ENCODE measurements at regions of chr9 and their contacts with region 1.

Region 1: DNA sequence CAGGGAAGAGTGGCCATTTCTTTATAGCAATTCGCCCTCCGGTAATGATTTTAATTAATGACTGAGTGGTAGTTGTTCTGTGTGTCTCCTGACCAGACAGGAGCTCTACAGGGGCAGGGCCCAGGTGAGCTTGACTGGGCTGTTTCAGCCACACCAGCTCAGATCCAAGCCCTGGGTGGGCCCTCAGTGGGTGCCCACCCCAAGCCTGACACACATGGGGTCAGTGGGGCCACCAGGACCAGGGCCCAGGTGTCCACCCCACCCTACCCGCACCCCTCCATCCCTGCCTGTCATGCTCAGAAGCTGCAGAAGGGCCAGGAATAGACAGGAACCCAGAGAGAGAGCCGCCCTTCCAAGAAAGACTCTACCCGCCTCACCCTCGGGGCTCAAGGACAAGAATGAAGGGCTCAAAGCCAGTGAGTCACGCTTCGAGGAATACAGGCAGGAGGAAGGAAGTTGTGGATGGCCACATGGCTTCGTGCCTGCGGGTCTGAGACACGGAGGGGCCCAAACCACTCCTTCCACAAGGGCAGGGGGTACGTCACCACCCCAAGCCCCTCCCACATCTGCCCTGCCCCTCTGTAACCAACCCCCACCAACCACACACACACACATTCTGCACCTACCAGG is 56.2 kb upstream of the STXBP1 start:
- DNase-seq: peak in 1 of 2 experiments; percentile 48
- H3K4me3 ChIP-seq: no peak overlapping the region
- H3K4me3 Mint-ChIP-seq: no peak overlapping the region
- H3K27ac Mint-ChIP-seq: peak overlapping the region; percentile 45
- H3K4me1 ChIP-seq: peaks cover 14% of the 10 kb centered on the region
- H3K4me1 Mint-ChIP-seq: no peaks in the 10 kb centered on the region
- H3K27me3 ChIP-seq: no peaks in the 10 kb centered on the region
- H3K27me3 Mint-ChIP-seq: no peaks in the 10 kb centered on the region
- CTCF ChIP-seq: no peak

Region 2: GRCh38 chr9:127277099-127277498 is 278.8 kb before region 1 on chr9:
- CTCF ChIA-PET with region 1: no interaction called
- POLR2A ChIA-PET with region 1: no interaction called
- intact Hi-C with region 1: no loop called
- DNase-seq: no peak
- H3K4me3 ChIP-seq: no peak overlapping the region
- H3K4me3 Mint-ChIP-seq: no peak overlapping the region
- H3K27ac Mint-ChIP-seq: no peak overlapping the region
- H3K4me1 ChIP-seq: peaks cover 5% of the 10 kb centered on the region; the same call in 1 of the 2 replicates
- H3K4me1 Mint-ChIP-seq: peaks cover 6% of the 10 kb centered on the region
- H3K27me3 ChIP-seq: no peaks in the 10 kb centered on the region
- H3K27me3 Mint-ChIP-seq: no peaks in the 10 kb centered on the region
- CTCF ChIP-seq: no peak

Region 3: GRCh38 chr9:127537013-127537412 is 18.9 kb before region 1 on chr9:
- CTCF ChIA-PET with region 1: no interaction called
- POLR2A ChIA-PET with region 1: interaction called, 13 read pairs
- intact Hi-C with region 1: no loop called
- DNase-seq: no peak
- H3K4me3 ChIP-seq: no peak overlapping the region
- H3K4me3 Mint-ChIP-seq: no peak overlapping the region
- H3K27ac Mint-ChIP-seq: no peak overlapping the region
- H3K4me1 ChIP-seq: no peaks in the 10 kb centered on the region
- H3K4me1 Mint-ChIP-seq: no peaks in the 10 kb centered on the region
- H3K27me3 ChIP-seq: no peaks in the 10 kb centered on the region
- H3K27me3 Mint-ChIP-seq: no peaks in the 10 kb centered on the region
- CTCF ChIP-seq: no peak

Measured in Caco-2 (cell line).